PC-3 (cell line): ENCODE measurements at regions of chr9 and their contacts with region 1.

Region 1: DNA sequence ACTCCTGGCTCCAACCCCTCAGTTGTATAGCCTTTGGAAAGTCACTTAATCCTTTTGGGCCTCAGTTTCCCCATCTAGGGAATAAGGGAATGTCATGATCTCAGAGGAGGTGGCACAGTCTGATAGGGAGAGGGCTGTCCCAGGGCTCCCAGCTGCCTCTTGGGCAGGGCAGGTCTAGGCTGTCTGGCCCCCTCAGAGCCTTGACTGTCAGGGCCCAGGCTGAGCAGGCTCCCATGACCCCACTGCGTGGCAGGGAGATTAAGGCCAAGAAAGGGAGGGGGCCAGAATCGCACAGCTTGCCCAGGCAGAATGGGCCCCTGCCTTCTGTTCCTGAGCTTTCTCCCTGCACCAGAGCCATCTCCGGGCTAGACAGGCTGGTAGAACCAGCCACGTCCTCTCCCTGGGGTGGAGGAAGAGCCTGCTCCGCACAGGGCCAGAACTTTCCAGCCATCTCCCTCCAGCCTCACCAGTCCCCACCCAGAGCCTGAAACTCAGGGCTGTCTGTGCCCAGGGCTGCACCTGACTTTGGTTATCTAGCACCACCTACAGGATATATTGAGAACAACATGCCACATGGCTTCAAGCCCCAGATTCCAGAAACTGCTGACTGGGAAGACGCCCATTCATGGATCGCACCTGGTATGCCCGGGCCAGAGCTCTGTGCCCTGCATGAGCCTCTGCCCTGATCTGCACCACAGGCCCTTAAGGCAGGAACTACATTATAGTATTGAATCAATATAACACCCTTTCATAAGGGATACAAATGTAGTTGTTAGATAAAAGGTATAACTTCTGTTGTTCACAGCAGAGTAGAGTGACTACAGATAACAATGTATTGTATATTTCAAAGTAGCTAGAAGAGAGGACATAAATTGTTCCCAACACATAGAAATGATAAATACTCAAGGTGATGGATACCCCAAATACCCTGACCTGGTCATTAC is 32.0 kb downstream of the NAIF1 start:
- DNase-seq: peak; percentile 91
- ATAC-seq: peak; percentile 94
- H3K4me3 ChIP-seq: no peak overlapping the region
- H3K27ac ChIP-seq: no peak overlapping the region
- H3K4me1 ChIP-seq: peaks cover 11% of the 10 kb centered on the region; the same call in 1 of the 2 replicates
- H3K27me3 ChIP-seq: no peaks in the 10 kb centered on the region
- CTCF ChIP-seq: peak; percentile 79

Region 2: DNA sequence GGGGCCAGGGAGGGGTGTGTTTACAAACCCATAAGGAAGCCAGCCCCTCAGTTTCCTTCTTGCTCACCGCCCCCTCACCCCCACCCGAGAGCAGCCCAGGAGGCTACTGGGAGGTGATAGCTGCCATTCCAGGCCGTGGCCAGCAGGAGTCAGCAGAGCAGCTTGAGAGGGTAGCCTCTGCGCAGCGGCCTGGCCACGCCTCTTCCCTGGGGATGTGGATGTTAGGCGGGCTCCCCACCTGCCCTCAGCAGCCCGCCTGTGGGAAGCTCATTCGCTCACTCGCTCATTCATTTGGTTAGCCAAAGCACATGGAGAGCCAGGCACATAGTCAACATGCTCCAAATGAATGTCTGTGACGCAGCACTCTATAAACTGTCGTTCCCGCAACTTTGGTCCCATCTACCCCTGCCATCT is 91.4 kb before region 1 on chr9:
- CTCF ChIA-PET with region 1: interaction called, 13 read pairs
- POLR2A ChIA-PET with region 1: no interaction called
- intact Hi-C with region 1: loop called (anchors 2 kb)
- DNase-seq: peak; percentile 77
- ATAC-seq: peak; percentile 92
- H3K4me3 ChIP-seq: no peak overlapping the region
- H3K27ac ChIP-seq: no peak overlapping the region
- H3K4me1 ChIP-seq: no peaks in the 10 kb centered on the region
- H3K27me3 ChIP-seq: no peaks in the 10 kb centered on the region
- CTCF ChIP-seq: peak; percentile 84

Region 3: GRCh38 chr9:127955294-127956035 is 79.6 kb before region 1 on chr9:
- CTCF ChIA-PET with region 1: no interaction called
- POLR2A ChIA-PET with region 1: no interaction called
- intact Hi-C with region 1: loop called (anchors 5 kb)
- DNase-seq: peak; percentile 95
- ATAC-seq: peak; percentile 98
- H3K4me3 ChIP-seq: peak overlapping the region; percentile 44
- H3K27ac ChIP-seq: peak overlapping the region; percentile 93
- H3K4me1 ChIP-seq: peaks cover 22% of the 10 kb centered on the region
- H3K27me3 ChIP-seq: no peaks in the 10 kb centered on the region
- CTCF ChIP-seq: peak; percentile 20; the same call in 1 of the 2 replicates

Region 4: DNA sequence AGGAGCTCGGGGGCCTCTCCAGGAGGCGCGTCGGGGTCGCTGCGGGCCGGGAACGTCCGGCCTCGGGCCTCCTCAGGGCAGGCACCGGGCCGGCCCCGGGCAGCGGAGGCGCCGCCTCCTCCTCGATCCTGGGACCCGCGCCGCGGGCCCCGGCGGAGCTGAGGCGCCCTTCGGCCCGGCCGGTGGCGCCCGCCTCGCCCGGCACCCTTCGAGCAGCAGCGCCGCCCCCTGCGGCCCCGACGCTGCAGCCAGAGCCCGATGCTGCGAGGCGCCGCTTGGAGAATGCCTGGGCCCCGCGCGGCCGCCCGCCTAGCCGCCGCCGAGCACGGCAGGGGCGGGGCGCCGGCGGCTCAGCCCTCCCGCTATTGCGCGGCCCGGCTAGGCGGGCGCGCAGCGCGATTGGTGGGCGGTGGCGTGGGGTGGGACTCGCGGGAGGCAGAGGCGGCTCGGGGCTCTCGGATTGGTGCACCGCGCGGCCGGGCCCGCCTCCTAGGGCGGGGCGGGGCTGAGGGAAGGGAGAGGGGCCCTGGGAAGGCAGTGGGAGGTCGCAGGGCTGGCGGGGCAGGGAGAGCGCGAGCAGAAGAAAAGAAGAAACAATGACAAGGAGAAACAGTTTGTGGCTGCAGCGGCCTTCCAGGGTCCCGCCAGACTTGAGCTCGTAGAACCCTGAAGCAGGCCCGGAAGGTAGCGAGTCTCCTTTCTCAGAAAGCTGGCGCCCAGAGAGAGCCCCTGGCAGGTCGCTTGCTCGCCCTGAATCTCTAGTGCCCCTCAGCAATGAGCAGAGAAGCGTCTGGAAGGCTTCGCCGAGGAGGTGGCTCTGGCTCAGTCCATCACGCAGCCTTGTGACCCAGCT is 54.2 kb before region 1 on chr9 and contains the start of gene EEIG1:
- CTCF ChIA-PET with region 1: interaction called, 3 read pairs
- POLR2A ChIA-PET with region 1: no interaction called
- intact Hi-C with region 1: loop called (anchors 2 kb)
- DNase-seq: peak; percentile 89
- ATAC-seq: peak; percentile 89
- H3K4me3 ChIP-seq: peak within 1 kb of the TSS; percentile 95
- H3K27ac ChIP-seq: no peak within 1 kb of the TSS
- H3K4me1 ChIP-seq: peaks cover 20% of the 10 kb centered on the region
- H3K27me3 ChIP-seq: no peaks in the 10 kb centered on the region
- CTCF ChIP-seq: no peak
- total RNA-seq, gene EEIG1: 10.8 and 26.1 TPM in 2 replicates

Region 5: GRCh38 chr9:128081056-128081455 is 46.0 kb after region 1 on chr9:
- CTCF ChIA-PET with region 1: no interaction called
- POLR2A ChIA-PET with region 1: no interaction called
- intact Hi-C with region 1: loop called (anchors 5 kb)
- DNase-seq: no peak
- ATAC-seq: no peak
- H3K4me3 ChIP-seq: no peak overlapping the region
- H3K27ac ChIP-seq: no peak overlapping the region
- H3K4me1 ChIP-seq: peaks cover 29% of the 10 kb centered on the region
- H3K27me3 ChIP-seq: no peaks in the 10 kb centered on the region
- CTCF ChIP-seq: no peak

Region 6: DNA sequence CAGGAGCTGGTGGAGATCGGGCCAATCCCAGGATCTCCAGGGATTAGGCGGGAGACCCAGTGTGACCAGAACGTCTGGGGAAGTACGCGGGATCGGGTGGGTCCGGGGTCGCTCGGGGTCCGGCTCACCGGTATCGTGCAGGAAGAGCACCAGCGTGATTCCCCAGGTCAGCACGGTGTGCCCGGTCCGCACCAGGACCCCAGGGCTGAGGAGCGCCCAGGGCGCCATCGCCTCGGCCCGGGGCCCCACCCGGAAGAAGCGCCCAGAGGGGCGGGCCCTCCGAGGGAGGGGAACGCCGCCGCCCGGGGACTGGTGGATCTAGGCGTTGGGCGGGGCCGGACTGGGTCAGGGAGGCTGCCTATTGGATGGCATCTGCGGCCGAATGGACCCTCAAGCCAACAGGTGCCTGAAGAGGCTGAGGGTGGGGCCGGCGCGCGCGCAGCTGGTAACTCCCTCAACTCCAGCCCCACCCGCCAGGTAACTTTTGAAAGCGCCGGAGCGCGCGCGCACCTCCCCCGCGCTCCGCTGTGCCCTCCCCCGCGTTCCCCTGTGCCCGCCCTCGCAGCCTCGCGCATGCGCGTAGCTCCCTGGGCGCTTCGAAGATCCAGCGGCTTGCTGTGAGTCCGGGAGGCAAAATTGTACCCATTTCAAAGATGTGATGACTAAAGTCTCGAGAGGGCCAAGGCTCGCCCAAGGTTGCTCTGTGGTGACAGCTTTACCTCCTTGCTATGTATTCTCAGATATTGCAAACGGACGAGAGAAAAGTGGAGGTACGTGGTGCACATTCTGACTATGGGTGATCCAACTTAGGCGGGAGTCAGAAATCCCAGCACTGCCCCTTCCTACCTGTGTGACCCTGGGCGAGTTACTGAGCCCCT is 689.0 kb after region 1 on chr9 and contains the start of gene ZDHHC12:
- CTCF ChIA-PET with region 1: interaction called, 10 read pairs
- POLR2A ChIA-PET with region 1: no interaction called
- intact Hi-C with region 1: no loop called
- DNase-seq: peak; percentile 95
- ATAC-seq: peak; percentile 94
- H3K4me3 ChIP-seq: peak within 1 kb of the TSS; percentile 81
- H3K27ac ChIP-seq: no peak within 1 kb of the TSS
- H3K4me1 ChIP-seq: no peaks in the 10 kb centered on the region
- H3K27me3 ChIP-seq: no peaks in the 10 kb centered on the region
- CTCF ChIP-seq: no peak
- total RNA-seq, gene ZDHHC12: 82.4 and 86.1 TPM in 2 replicates